GM12878 (cell line): ENCODE measurements at regions of chr5 and their contacts with region 1.

Region 1: GRCh38 chr5:5752844-5753243 is 330.4 kb downstream of the ICE1 start:
- DNase-seq: peak; percentile 88
- ATAC-seq: peak; percentile 75
- H3K4me3 ChIP-seq: peak overlapping the region; percentile 34; the same call in 1 of the 2 replicates
- H3K27ac ChIP-seq: peak overlapping the region; percentile 57
- H3K4me1 ChIP-seq: peaks cover 56% of the 10 kb centered on the region
- H3K27me3 ChIP-seq: no peaks in the 10 kb centered on the region
- CTCF ChIP-seq: no peak
- EP300 ChIP-seq: peak; percentile 80 to 88; a peak in 3 of 4 replicates
- POLR2A ChIP-seq: no peak
- RAD21 ChIP-seq: no peak

Region 2: GRCh38 chr5:5421961-5422818 is 330.7 kb before region 1 on chr5 and contains the start of gene ICE1:
- CTCF ChIA-PET with region 1: no interaction called
- POLR2A ChIA-PET with region 1: no interaction called
- RAD21 ChIA-PET with region 1: no interaction called
- SMC1A ChIA-PET with region 1: no interaction called
- in situ Hi-C with region 1: no loop called
- intact Hi-C with region 1: loop called (anchors 5 kb)
- DNase-seq: peak; percentile 91
- ATAC-seq: peak; percentile 90
- H3K4me3 ChIP-seq: peak within 1 kb of the TSS; percentile 91
- H3K27ac ChIP-seq: peak within 1 kb of the TSS; percentile 94
- H3K4me1 ChIP-seq: peaks cover 27% of the 10 kb centered on the region
- H3K27me3 ChIP-seq: no peaks in the 10 kb centered on the region
- CTCF ChIP-seq: no peak
- EP300 ChIP-seq: no peak
- POLR2A ChIP-seq: peak; percentile 94
- RAD21 ChIP-seq: no peak
- polyA plus RNA-seq, gene ICE1: 3.8 to 5.5 TPM

Region 3: GRCh38 chr5:5738797-5739489 is 13.9 kb before region 1 on chr5:
- CTCF ChIA-PET with region 1: interaction called, 5 read pairs
- POLR2A ChIA-PET with region 1: interaction called, 3 read pairs
- RAD21 ChIA-PET with region 1: interaction called, 3 read pairs
- SMC1A ChIA-PET with region 1: interaction called, 13 read pairs
- in situ Hi-C with region 1: no loop called
- intact Hi-C with region 1: no loop called
- DNase-seq: peak; percentile 28
- ATAC-seq: peak; percentile 74
- H3K4me3 ChIP-seq: no peak overlapping the region
- H3K27ac ChIP-seq: no peak overlapping the region
- H3K4me1 ChIP-seq: peaks cover 5% of the 10 kb centered on the region; the same call in 1 of the 2 replicates
- H3K27me3 ChIP-seq: no peaks in the 10 kb centered on the region
- CTCF ChIP-seq: no peak
- EP300 ChIP-seq: no peak
- POLR2A ChIP-seq: no peak
- RAD21 ChIP-seq: no peak

Region 4: DNA sequence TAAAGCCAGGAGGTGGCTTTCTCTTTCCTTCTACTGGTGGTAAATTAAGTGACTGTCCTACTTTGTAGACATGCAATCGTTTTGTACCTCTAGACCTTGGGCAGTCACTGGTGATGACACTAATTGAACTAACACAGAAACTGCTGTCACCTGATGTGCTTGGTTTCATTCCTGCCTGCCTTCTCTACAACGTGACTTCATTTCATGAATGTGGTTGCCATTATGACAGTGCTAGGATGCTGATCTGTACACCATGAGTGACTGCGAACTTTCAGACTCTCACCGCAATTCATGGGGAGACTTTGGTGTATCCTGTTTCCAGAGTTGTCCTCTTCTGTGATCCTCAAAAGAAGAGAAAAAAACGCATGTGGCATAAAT is 743.4 kb after region 1 on chr5:
- CTCF ChIA-PET with region 1: no interaction called
- POLR2A ChIA-PET with region 1: no interaction called
- RAD21 ChIA-PET with region 1: no interaction called
- SMC1A ChIA-PET with region 1: no interaction called
- in situ Hi-C with region 1: loop called (anchors 5 kb)
- intact Hi-C with region 1: no loop called
- DNase-seq: peak; percentile 97
- ATAC-seq: peak; percentile 86
- H3K4me3 ChIP-seq: no peak overlapping the region
- H3K27ac ChIP-seq: peak overlapping the region; percentile 21; the same call in 1 of the 2 replicates
- H3K4me1 ChIP-seq: peaks cover 38% of the 10 kb centered on the region
- H3K27me3 ChIP-seq: no peaks in the 10 kb centered on the region
- CTCF ChIP-seq: no peak
- EP300 ChIP-seq: peak; percentile 97 to 99
- POLR2A ChIP-seq: no peak
- RAD21 ChIP-seq: no peak

Region 5: GRCh38 chr5:6728011-6728794 is 975.4 kb after region 1 on chr5:
- CTCF ChIA-PET with region 1: no interaction called
- POLR2A ChIA-PET with region 1: no interaction called
- RAD21 ChIA-PET with region 1: interaction called, 3 read pairs
- SMC1A ChIA-PET with region 1: no interaction called
- in situ Hi-C with region 1: loop called (anchors 10 kb)
- intact Hi-C with region 1: no loop called
- DNase-seq: no peak
- ATAC-seq: peak; percentile 89
- H3K4me3 ChIP-seq: peak overlapping the region; percentile 31
- H3K27ac ChIP-seq: peak overlapping the region; percentile 84
- H3K4me1 ChIP-seq: peaks cover 64% of the 10 kb centered on the region
- H3K27me3 ChIP-seq: no peaks in the 10 kb centered on the region
- CTCF ChIP-seq: no peak
- EP300 ChIP-seq: peak; percentile 64 to 91
- POLR2A ChIP-seq: 0 out of 2 replicates have a peak, but pooled peaks have one; percentile 15
- RAD21 ChIP-seq: no peak